Breast epithelium (tissue), 4 donors: ENCODE measurements at regions of chr18 and their contacts with region 1.

Region 1: GRCh38 chr18:58770601-58771000 is 94.1 kb upstream of the ZNF532 start:
- DNase-seq: no peak
- H3K4me3 ChIP-seq: no peak overlapping the region
- H3K27ac ChIP-seq: no peak overlapping the region
- H3K4me1 ChIP-seq: no peaks in the 10 kb centered on the region
- H3K27me3 ChIP-seq: peaks cover 0 to 7% of the 10 kb centered on the region in 2 donors
- CTCF ChIP-seq: no peak
- POLR2A ChIP-seq: no peak

Region 2: DNA sequence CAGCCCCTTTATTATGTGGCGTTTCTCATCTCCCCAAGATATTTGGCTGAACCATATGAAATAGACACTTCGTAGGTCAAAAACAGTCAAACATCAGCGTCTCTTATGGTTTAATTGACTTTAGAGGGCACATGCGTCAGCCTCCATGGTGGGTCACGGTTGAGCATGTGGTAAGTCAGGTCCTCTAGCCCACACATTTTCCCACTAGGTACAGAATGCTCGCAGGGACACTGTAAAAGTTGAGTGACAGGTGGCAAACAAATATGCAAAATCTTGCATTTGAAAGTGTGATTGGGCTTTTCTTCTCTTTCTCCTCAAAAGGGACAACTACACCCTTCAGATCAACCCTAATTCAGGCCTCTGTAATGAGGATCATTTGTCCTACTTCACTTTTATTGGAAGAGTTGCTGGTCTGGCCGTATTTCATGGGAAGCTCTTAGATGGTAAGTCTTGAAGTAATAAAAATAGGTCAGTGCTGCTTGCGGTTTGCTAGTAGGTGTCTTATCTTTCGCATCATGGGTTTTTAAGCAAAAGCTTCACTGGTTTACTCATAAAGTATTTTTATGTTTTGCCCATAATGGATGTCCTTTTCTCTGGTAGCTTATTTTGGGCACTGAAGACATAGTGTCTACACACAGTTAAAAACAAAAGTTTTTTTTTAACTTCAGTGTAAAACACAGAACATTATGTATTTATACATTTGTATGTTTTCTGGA is 403.0 kb before region 1 on chr18:
- intact Hi-C with region 1: loop called (anchors 2 kb)
- DNase-seq: no peak
- H3K4me3 ChIP-seq: no peak overlapping the region
- H3K27ac ChIP-seq: no peak overlapping the region
- H3K4me1 ChIP-seq: no peaks in the 10 kb centered on the region
- H3K27me3 ChIP-seq: no peaks in the 10 kb centered on the region
- CTCF ChIP-seq: no peak
- POLR2A ChIP-seq: no peak

Region 3: DNA sequence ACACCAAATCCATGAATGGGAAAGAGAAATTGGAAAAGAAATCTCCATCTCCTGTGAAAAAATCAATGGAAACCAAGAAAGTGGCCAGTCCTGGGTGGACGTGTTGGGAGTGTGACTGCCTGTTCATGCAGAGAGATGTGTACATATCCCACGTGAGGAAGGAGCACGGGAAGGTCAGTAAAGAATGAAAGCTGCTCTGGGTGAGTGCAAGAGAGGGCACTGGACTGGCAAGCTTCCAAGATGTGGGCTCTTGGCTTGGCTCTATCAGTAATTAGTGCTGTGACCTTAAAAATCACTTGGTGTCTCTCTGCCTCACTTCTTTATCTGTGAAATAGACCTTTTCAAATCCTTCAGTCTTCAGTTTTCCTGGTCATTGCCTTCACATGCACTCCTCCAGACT is 183.0 kb after region 1 on chr18:
- intact Hi-C with region 1: no loop called
- DNase-seq: no peak
- H3K4me3 ChIP-seq: no peak overlapping the region
- H3K27ac ChIP-seq: no peak overlapping the region
- H3K4me1 ChIP-seq: no peaks in the 10 kb centered on the region
- H3K27me3 ChIP-seq: no peaks in the 10 kb centered on the region
- CTCF ChIP-seq: no peak
- POLR2A ChIP-seq: no peak